Prostate gland (tissue), 2 donors: ENCODE measurements at regions of chr12 and their contacts with region 1.

Region 1: DNA sequence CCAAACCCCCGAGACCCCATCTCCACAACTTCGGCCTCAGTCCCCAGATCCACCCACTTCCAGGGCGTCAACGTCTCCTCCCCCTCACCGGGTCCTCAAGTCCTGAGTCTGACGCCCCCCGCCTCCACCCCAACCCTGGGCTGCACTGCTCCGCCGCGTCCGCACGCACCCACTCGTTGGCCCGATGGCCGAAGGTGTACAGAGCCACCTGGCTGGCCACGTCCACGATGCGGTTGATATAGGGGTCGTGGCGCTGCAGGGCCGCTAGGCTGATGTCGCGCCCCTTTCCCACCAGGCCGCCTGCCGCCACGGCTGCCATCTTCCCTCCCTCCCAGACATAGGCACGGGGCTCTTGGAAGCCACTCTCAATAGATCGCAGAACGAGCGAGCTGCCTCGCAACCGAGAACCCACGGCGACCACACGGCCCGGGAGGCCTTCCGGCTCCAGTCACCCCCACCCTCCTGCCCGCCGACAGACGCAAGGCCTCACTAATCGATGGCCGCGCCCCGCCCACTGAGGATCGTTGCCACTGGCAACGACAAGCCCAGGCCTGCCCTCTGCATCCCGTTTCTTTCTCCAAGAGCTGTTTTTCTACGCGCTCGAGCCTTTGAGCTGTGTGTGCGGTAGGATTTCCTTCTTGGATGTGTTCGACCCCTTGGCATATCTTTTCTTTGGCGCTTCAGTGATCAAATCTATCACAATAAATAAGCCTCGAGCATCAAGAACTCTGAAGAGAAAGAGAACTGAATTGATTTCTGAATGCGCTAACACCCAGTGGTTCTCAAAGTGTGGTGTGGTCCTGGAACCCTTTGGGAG is at the start of gene DCP1B:
- DNase-seq: peak; percentile 94
- H3K4me3 ChIP-seq: peak within 1 kb of the TSS; percentile 71 to 92
- H3K27ac ChIP-seq: peak within 1 kb of the TSS; percentile 89 to 92
- H3K4me1 ChIP-seq: no peaks in the 10 kb centered on the region
- H3K27me3 ChIP-seq: no peaks in the 10 kb centered on the region
- CTCF ChIP-seq: peak in 1 of 4 experiments; percentile 40
- POLR2A ChIP-seq: peak; percentile 63
- total RNA-seq, gene DCP1B: 20.1 to 31.9 TPM

Region 2: DNA sequence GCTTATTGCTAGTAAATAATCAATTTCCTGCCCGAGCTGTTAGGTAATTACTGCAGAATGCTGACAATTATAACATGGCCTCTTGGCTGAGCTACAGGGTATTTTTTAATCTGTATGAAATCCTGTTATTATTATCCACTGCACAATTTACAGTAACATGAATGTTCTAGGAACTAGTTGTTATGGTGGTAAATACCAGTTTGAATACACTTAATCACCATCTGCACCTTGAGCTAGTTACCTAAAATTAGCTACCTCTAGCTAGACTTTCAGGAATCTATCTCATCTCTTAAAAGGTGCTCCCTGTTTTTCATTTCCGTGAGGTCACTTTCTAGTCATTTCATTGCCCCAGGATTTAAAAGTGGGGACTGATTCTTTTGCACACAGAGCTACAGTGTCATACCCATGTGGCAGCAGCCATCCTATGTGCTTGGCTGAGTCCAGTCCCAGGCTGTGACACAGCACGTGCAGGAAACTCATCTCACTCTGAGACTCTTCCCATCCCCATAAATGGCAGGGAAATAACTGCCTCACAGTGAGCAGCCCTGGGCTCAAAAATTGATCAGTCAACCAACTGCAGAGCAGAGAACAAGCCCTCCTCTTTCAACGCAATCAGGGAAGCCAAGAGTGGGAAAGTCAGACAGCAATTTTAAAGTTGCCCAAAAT is 37.6 kb before region 1 on chr12:
- intact Hi-C with region 1: loop called (anchors 5 kb)
- DNase-seq: no peak
- H3K4me3 ChIP-seq: no peak overlapping the region
- H3K27ac ChIP-seq: peak overlapping the region; percentile 25 to 37
- H3K4me1 ChIP-seq: no peaks in the 10 kb centered on the region
- H3K27me3 ChIP-seq: no peaks in the 10 kb centered on the region
- CTCF ChIP-seq: no peak
- POLR2A ChIP-seq: no peak